RWPE1 (cell line): ENCODE measurements at regions of chr12 and their contacts with region 1.

Region 1: DNA sequence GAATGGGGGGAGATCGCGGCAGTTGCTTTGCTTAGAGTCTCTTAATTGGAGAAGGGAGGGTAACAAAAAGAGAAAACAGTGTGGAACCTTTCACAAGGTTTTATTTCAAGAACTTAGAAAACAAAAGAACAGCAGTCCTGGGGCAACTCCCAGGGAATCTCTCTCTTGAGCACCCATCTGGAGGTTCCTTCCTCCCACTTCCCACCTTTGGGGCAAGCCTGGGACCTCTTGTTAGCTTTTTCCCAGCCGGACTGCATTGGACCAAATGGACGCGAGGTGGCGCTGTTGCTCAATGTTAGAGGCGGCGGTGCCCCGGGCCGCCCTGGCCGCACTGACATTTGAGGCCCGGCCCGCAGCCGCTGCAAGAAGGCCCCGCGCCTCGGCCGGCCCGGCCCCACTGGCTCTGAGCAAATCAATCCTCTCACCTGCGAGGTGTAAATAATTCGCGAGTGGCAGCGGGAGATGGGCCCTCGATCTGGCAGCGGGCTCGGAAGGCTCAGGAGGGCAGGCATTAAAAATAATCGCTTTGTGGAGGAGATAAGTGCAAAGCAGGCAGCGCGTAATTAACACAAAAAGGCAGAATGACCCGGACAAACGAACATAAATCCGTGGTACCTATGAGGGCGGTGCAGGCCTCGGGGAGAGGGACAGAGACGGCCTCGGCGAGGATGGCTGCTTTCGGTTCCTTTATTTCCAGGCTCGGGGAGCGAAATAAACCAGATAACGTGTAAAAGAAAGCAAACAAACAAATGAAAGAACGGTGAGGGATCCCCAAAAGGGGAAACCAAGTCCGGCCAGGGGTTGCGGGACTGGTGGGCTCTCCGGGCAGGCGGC is 2.7 kb upstream of the HOXC8 start:
- DNase-seq: peak; percentile 81
- H3K27ac ChIP-seq: no peak overlapping the region
- CTCF ChIP-seq: peak; percentile 85

Region 2: DNA sequence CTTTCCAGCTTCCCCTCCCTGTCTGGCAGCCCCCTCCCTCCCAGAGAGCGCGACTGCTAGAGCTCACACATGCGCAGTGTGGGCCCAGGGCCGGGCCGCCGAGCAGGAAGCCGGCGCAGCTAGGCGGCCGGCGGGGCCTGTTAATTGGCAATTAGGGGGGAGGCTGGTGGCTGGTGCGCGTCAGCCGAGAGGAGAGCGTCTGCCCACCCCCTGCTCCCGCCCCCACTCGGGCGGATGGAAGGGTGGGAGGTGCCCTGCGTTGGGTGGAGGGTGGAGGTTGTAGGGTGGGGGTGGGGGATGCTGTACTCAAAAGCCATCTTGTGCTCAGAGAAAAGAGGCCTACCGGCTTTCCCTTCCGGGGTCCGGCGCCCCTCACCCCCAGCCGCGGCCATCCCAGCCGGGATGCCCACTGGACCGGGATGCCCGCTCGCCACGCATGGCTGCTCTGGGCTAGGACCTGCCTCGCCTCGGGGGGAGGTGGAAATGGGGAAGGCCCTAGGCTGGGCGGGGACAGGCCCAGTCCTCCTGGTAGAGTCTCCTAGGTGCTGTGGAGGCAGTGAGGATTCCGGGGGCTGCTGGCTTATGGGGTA is 11.9 kb after region 1 on chr12:
- CTCF ChIA-PET with region 1: interaction called, 15 read pairs
- POLR2A ChIA-PET with region 1: no interaction called
- DNase-seq: peak; percentile 95
- H3K27ac ChIP-seq: peak overlapping the region; percentile 64
- CTCF ChIP-seq: no peak

Region 3: DNA sequence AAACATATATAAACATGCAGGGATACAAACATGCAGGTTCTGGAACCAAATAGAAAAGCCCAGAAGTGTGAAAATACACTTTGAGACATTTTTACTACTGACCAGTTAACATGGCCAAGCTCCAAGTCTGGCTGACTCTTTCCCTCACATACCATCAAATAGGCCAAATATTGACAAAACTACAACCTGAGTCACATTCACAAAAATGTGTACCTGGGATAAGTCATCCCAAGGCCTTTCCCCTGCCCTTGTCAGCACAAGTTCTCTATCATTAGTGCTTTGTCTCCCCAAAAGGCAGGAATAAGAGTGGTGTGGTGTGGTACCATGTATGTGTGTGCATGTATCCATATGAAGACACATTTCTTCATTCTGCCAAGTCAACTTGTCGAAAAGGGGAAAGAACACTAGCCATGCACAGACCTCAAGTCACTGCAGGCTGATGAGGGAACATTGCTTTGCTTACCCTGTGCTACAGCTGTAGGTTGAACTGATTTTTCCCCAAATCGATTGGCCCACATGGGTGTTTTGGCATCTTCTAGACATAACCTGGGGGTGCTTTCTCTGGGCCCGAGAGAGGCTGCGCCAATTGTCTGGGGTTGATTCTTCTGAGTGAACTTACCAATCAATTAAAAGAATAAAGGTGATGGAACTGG is 62.5 kb after region 1 on chr12:
- CTCF ChIA-PET with region 1: no interaction called
- POLR2A ChIA-PET with region 1: no interaction called
- DNase-seq: peak; percentile 52
- H3K27ac ChIP-seq: no peak overlapping the region
- CTCF ChIP-seq: no peak

Region 4: GRCh38 chr12:54191550-54192022 is 185.5 kb after region 1 on chr12:
- CTCF ChIA-PET with region 1: interaction called, 16 read pairs
- POLR2A ChIA-PET with region 1: interaction called, 9 read pairs
- DNase-seq: peak; percentile 86
- H3K27ac ChIP-seq: no peak overlapping the region
- CTCF ChIP-seq: peak; percentile 85

Region 5: GRCh38 chr12:54201001-54201794 is 195.1 kb after region 1 on chr12:
- CTCF ChIA-PET with region 1: interaction called, 47 read pairs
- POLR2A ChIA-PET with region 1: no interaction called
- DNase-seq: peak; percentile 73
- H3K27ac ChIP-seq: no peak overlapping the region
- CTCF ChIP-seq: peak; percentile 92

Region 6: GRCh38 chr12:54723379-54724256 is 717.5 kb after region 1 on chr12:
- CTCF ChIA-PET with region 1: no interaction called
- POLR2A ChIA-PET with region 1: no interaction called
- DNase-seq: no peak
- H3K27ac ChIP-seq: no peak overlapping the region
- CTCF ChIP-seq: peak; percentile 34